ENCODE measurements at regions of chr2 and their contacts with region 1.

Region 1: DNA sequence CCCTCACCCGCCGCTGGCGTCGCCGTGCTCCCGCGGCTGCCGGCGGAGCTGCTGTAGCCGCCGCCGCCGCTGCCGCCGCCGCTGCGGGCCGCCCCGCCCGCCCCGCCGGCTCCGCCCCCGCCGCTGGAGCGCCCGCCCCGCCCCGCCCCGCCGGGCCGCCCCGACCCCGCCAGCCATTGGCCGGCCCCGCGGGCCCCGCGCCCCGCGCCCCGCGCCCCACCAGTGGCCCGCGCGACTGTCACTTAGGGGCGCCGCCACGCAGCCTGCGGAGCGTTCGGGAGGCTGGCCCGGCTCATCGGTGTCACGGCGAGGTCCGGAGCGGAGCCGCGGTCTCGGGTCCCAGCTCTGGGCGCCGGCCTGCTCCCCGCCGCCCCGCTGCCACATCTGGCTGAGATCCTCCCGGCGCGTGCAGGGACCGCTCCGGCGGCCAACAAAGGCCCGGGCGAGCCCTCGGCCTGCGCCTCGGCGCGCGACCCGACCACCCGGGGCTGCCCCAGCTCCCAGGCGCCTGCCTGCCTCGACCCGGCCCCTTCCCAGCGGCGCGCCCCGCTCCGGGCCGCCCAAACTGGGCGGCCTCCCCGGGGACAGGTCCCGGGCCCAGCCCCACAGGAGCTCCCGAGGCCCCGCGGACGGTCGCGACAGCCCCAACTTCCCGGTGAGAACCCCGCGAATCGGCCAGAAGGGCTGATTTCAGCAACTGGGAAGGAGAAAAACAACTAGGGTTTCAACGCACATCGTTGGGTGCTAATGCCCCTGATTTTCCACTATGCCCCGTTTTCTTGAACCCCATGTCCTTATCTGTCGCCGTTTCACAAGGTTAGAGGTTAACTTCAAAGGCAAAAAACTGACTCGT is at the start of gene MGAT4A:
- DNase-seq: peak; percentile 74 to 85 (median 82)
- ATAC-seq: peak; percentile 88
- H3K4me3 ChIP-seq: peak within 1 kb of the TSS; percentile 79
- H3K4me3 Mint-ChIP-seq: peak within 1 kb of the TSS; percentile 89 to 98 (median 94)
- H3K27ac ChIP-seq: peak within 1 kb of the TSS; percentile 98
- H3K27ac Mint-ChIP-seq: peak within 1 kb of the TSS; percentile 90 to 98 (median 96)
- H3K4me1 ChIP-seq: peaks cover 48% of the 10 kb centered on the region in 2 donors
- H3K4me1 Mint-ChIP-seq: peaks cover 27 to 75% (median 64%) of the 10 kb centered on the region in 7 donors
- H3K27me3 ChIP-seq: no peaks in the 10 kb centered on the region
- H3K27me3 Mint-ChIP-seq: no peaks in the 10 kb centered on the region
- total RNA-seq, gene MGAT4A: 125 to 308 (median 240) TPM

Region 2: GRCh38 chr2:97995734-97996624 is 735.3 kb before region 1 on chr2 and contains the start of gene TMEM131:
- CTCF ChIA-PET with region 1: interaction called, 3 read pairs
- POLR2A ChIA-PET with region 1: no interaction called
- intact Hi-C with region 1: loop called in 1 of 2 experiments (anchors 5 kb)
- DNase-seq: peak; percentile 89 to 98 (median 95)
- ATAC-seq: peak; percentile 93
- H3K4me3 ChIP-seq: peak within 1 kb of the TSS; percentile 90
- H3K4me3 Mint-ChIP-seq: peak within 1 kb of the TSS; percentile 85 to 98 (median 96)
- H3K27ac ChIP-seq: peak within 1 kb of the TSS; percentile 96
- H3K27ac Mint-ChIP-seq: peak within 1 kb of the TSS; percentile 86 to 95 (median 93)
- H3K4me1 ChIP-seq: peaks cover 14 to 17% of the 10 kb centered on the region in 2 donors
- H3K4me1 Mint-ChIP-seq: peaks cover 20 to 40% (median 38%) of the 10 kb centered on the region in 7 donors
- H3K27me3 ChIP-seq: no peaks in the 10 kb centered on the region
- H3K27me3 Mint-ChIP-seq: peaks cover 0 to 4% (median 0%) of the 10 kb centered on the region in 5 donors
- total RNA-seq, gene TMEM131: 39.7 to 46.4 (median 43.6) TPM

Region 3: DNA sequence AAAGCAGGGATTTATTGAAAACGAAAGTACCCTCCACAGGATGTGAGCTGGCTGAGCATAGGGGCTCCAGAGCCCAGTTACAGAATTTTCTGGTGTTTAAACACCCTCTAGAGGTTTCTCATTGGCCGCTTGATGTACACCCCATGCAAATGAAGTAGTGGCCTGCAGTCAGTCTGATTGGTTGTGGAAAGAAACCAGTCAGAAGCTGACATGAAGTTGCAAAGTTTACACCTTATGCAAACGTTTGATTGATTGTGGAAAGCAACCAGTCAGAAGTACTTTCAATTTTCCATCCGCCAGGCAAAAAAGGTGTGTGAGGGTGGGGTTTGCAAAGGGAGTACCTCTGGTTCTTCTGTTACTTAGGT is 582.0 kb before region 1 on chr2:
- CTCF ChIA-PET with region 1: no interaction called
- POLR2A ChIA-PET with region 1: no interaction called
- intact Hi-C with region 1: no loop called
- DNase-seq: peak in 7 of 9 donors; percentile 13 to 35 (median 24)
- ATAC-seq: peak; percentile 72
- H3K4me3 ChIP-seq: no peak overlapping the region
- H3K4me3 Mint-ChIP-seq: peak overlapping the region in 4 of 10 donors; percentile 19 to 50 (median 28)
- H3K27ac ChIP-seq: no peak overlapping the region
- H3K27ac Mint-ChIP-seq: peak overlapping the region in 3 of 9 donors; percentile 1 to 24 (median 9)
- H3K4me1 ChIP-seq: no peaks in the 10 kb centered on the region
- H3K4me1 Mint-ChIP-seq: peaks cover 0 to 10% (median 4%) of the 10 kb centered on the region in 7 donors
- H3K27me3 ChIP-seq: no peaks in the 10 kb centered on the region
- H3K27me3 Mint-ChIP-seq: peaks cover 5 to 11% (median 8%) of the 10 kb centered on the region in 5 donors

Region 4: DNA sequence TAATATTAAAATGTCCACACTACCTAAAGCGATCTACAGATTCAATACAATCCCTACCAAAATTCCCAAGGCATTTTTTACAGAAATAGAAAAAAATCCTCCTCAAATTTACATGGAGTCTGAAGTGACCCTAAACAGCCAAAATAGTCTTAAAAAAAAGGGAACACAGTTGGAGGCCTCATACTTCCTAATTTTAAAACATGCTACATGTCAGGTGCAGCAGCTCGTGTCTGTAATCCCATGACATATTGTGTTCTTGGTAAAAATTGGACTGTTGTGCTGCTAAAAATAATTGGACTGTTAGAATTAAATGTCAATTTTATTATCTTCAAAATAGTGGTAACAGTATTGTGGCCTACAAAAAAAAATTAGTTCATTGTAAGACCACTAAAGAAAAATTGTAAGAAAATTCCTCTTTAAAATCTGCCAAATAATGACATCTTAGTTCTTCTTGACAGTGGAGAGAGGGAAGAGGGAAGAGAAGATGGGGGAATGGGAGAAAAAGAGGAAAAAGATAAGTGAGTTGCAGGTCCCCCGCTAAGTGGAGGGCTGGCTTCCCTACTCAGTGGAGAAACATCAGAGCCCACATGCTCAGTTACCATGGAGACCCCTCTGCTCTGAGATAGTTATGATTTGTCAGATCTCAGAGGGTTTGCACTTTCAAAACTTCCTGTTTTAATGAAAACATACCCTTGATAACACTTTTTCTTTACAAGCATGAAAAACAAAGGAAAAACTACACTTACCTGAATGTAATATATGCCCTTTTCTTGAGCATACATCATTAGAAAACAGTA is 76.4 kb before region 1 on chr2:
- CTCF ChIA-PET with region 1: interaction called, 15 read pairs
- POLR2A ChIA-PET with region 1: interaction called, 353 read pairs
- intact Hi-C with region 1: loop called (anchors 1 to 2 kb)
- DNase-seq: peak in 7 of 9 donors; percentile 52 to 80 (median 75)
- ATAC-seq: peak; percentile 72
- H3K4me3 ChIP-seq: peak overlapping the region; percentile 4
- H3K4me3 Mint-ChIP-seq: peak overlapping the region; percentile 40 to 81 (median 69)
- H3K27ac ChIP-seq: peak overlapping the region; percentile 79
- H3K27ac Mint-ChIP-seq: peak overlapping the region; percentile 76 to 99 (median 93)
- H3K4me1 ChIP-seq: peaks cover 64 to 85% of the 10 kb centered on the region in 2 donors
- H3K4me1 Mint-ChIP-seq: peaks cover 50 to 97% (median 88%) of the 10 kb centered on the region in 7 donors
- H3K27me3 ChIP-seq: no peaks in the 10 kb centered on the region
- H3K27me3 Mint-ChIP-seq: no peaks in the 10 kb centered on the region

Region 5: GRCh38 chr2:98691303-98691702 is 40.0 kb before region 1 on chr2:
- CTCF ChIA-PET with region 1: interaction called, 3 read pairs
- POLR2A ChIA-PET with region 1: interaction called, 19 read pairs
- intact Hi-C with region 1: loop called in 1 of 2 experiments (anchors 2 kb)
- DNase-seq: peak in 1 of 9 donors; percentile 14
- ATAC-seq: peak; percentile 52
- H3K4me3 ChIP-seq: no peak overlapping the region
- H3K4me3 Mint-ChIP-seq: peak overlapping the region in 8 of 10 donors; percentile 29 to 71 (median 54)
- H3K27ac ChIP-seq: peak overlapping the region; percentile 7
- H3K27ac Mint-ChIP-seq: peak overlapping the region; percentile 32 to 94 (median 79)
- H3K4me1 ChIP-seq: peaks cover 60 to 61% of the 10 kb centered on the region in 2 donors
- H3K4me1 Mint-ChIP-seq: peaks cover 56 to 97% (median 91%) of the 10 kb centered on the region in 7 donors
- H3K27me3 ChIP-seq: no peaks in the 10 kb centered on the region
- H3K27me3 Mint-ChIP-seq: no peaks in the 10 kb centered on the region

Region 6: GRCh38 chr2:98757904-98758421 is 26.7 kb after region 1 on chr2:
- CTCF ChIA-PET with region 1: interaction called, 17 read pairs
- POLR2A ChIA-PET with region 1: interaction called, 310 read pairs
- intact Hi-C with region 1: loop called (anchors 1 kb)
- DNase-seq: peak in 8 of 9 donors; percentile 46 to 79 (median 74)
- ATAC-seq: peak; percentile 89
- H3K4me3 ChIP-seq: peak overlapping the region; percentile 46
- H3K4me3 Mint-ChIP-seq: peak overlapping the region; percentile 79 to 98 (median 85)
- H3K27ac ChIP-seq: peak overlapping the region; percentile 70
- H3K27ac Mint-ChIP-seq: peak overlapping the region; percentile 91 to 100 (median 97)
- H3K4me1 ChIP-seq: peaks cover 45 to 70% of the 10 kb centered on the region in 2 donors
- H3K4me1 Mint-ChIP-seq: peaks cover 56 to 97% (median 80%) of the 10 kb centered on the region in 7 donors
- H3K27me3 ChIP-seq: no peaks in the 10 kb centered on the region
- H3K27me3 Mint-ChIP-seq: no peaks in the 10 kb centered on the region

Region 7: GRCh38 chr2:98828793-98829371 is 97.6 kb after region 1 on chr2:
- CTCF ChIA-PET with region 1: no interaction called
- POLR2A ChIA-PET with region 1: interaction called, 40 read pairs
- intact Hi-C with region 1: no loop called
- DNase-seq: peak in 1 of 9 donors; percentile 28
- ATAC-seq: peak; percentile 28
- H3K4me3 ChIP-seq: no peak overlapping the region
- H3K4me3 Mint-ChIP-seq: peak overlapping the region in 9 of 10 donors; percentile 7 to 79 (median 62)
- H3K27ac ChIP-seq: no peak overlapping the region
- H3K27ac Mint-ChIP-seq: peak overlapping the region; percentile 60 to 93 (median 79)
- H3K4me1 ChIP-seq: peaks cover 25 to 39% of the 10 kb centered on the region in 2 donors
- H3K4me1 Mint-ChIP-seq: peaks cover 39 to 73% (median 48%) of the 10 kb centered on the region in 7 donors
- H3K27me3 ChIP-seq: no peaks in the 10 kb centered on the region
- H3K27me3 Mint-ChIP-seq: peaks cover 0 to 2% (median 0%) of the 10 kb centered on the region in 5 donors

Region 8: DNA sequence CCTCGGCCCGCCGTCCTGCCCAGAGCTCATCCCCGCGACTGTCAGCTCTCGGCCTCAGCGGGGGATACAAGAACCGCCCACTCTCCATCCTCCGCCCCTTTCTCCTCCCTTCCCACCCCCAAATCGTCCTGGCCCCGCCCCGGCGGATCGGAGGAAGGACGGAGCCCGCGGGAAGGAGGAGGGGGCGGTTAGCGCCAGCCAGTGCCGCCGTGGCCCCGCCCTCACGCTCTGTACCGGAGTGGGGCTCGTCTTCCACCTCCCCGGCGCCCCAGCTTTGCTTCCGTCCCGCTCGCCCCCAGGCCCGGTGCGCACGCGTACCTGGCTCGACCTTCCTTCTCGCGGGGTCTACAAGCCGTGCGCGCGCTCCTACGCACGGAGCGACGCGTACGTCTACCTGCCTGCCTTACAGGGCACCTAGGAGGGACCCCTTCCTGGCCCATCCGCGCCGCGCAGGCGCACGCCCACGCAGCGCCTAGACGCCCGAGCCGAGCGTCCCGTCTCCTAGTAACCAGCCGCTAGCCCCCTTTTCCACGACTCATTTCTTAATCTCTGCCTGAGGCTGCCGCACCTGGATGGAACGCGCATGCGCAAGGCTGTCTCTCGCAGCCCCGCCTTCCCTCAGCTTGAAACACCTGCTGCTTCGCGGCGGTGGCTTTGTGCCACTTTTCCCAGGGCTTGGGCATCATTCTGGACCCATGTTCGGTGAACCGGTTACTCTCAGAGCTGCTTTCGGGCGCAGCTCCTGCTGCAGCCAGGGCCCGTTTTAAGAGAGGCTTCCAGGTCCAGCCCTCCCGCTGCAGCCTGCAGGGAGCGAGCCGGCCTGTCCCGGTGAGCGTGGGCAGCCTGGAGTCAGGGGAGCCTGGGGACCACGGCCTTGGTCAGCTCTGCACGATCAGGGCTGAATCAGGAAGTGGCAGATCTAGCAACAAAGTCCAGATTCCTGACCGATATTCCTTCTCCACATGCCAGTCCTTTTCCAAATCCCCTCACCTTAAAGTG is 410.1 kb after region 1 on chr2 and contains the start of gene C2orf15:
- CTCF ChIA-PET with region 1: no interaction called
- POLR2A ChIA-PET with region 1: no interaction called
- intact Hi-C with region 1: loop called in 1 of 2 experiments (anchors 2 kb)
- DNase-seq: peak; percentile 89 to 98 (median 96)
- ATAC-seq: peak; percentile 95
- H3K4me3 ChIP-seq: peak within 1 kb of the TSS; percentile 97
- H3K4me3 Mint-ChIP-seq: peak within 1 kb of the TSS; percentile 90 to 99 (median 97)
- H3K27ac ChIP-seq: peak within 1 kb of the TSS; percentile 82
- H3K27ac Mint-ChIP-seq: peak within 1 kb of the TSS; percentile 92 to 99 (median 98)
- H3K4me1 ChIP-seq: peaks cover 13% of the 10 kb centered on the region in 2 donors
- H3K4me1 Mint-ChIP-seq: peaks cover 0 to 31% (median 25%) of the 10 kb centered on the region in 7 donors
- H3K27me3 ChIP-seq: no peaks in the 10 kb centered on the region
- H3K27me3 Mint-ChIP-seq: peaks cover 0 to 41% (median 0%) of the 10 kb centered on the region in 5 donors
- total RNA-seq, gene C2orf15: 0.48 to 3.8 (median 3.1) TPM

Measured in naive thymus-derived CD4-positive, alpha-beta T cell (primary cell).